Activated B cell treated with CpG ODN at 0.5 μM for 24 hours (primary cell): ENCODE measurements at regions of chr5 and their contacts with region 1.

Region 1: DNA sequence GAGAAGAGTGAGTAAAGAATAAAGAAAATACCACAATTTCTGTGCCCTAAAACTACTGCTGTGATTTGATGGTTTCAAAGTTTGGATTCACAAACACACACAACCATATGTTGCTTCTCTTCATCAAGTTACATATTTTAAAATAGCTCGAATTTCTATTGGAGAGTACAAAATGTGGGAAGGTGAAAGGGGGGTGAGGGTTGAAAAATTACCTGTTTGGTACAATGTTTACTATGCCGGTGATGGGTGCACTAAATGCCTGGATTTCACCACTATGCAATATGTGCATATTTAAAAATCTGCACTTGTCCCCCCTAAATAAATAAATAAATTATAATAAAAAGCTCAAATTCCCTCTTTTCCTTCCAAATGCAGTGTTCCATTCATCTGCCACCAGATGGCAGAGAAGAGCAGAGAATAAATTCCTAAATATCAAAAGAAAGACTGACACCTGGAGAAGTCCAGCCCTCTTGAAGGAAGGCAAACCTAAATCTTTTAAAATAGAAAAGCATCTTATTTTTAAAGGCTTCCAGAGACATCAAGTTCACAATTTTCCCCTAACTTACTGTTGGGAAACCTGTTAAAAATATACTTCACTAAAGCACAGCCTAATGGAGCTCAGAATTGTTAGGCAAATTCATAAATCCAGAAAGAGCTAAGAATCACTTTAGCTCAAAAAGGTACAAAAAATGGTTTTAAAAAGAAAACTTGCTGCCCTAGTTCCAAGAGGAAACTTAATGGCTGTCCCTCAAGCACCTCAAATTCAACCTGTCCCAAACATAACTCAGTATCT is 24.8 kb upstream of the HNRNPA0 start:
- DNase-seq: no peak
- ATAC-seq: no peak
- H3K4me3 Mint-ChIP-seq: no peak overlapping the region
- H3K27ac Mint-ChIP-seq: no peak overlapping the region
- H3K4me1 Mint-ChIP-seq: peaks cover 4% of the 10 kb centered on the region
- H3K27me3 Mint-ChIP-seq: no peaks in the 10 kb centered on the region
- CTCF ChIP-seq: no peak

Region 2: GRCh38 chr5:137822158-137822764 is 43.3 kb after region 1 on chr5:
- CTCF ChIA-PET with region 1: interaction called, 9 read pairs
- POLR2A ChIA-PET with region 1: no interaction called
- intact Hi-C with region 1: loop called (anchors 1 kb)
- DNase-seq: no peak
- ATAC-seq: no peak
- H3K4me3 Mint-ChIP-seq: no peak overlapping the region
- H3K27ac Mint-ChIP-seq: no peak overlapping the region
- H3K4me1 Mint-ChIP-seq: no peaks in the 10 kb centered on the region
- H3K27me3 Mint-ChIP-seq: no peaks in the 10 kb centered on the region
- CTCF ChIP-seq: no peak

Region 3: GRCh38 chr5:137933491-137933911 is 154.5 kb after region 1 on chr5:
- CTCF ChIA-PET with region 1: interaction called, 9 read pairs
- POLR2A ChIA-PET with region 1: interaction called, 7 read pairs
- intact Hi-C with region 1: loop called (anchors 5 kb)
- DNase-seq: no peak
- ATAC-seq: no peak
- H3K4me3 Mint-ChIP-seq: no peak overlapping the region
- H3K27ac Mint-ChIP-seq: peak overlapping the region; percentile 6
- H3K4me1 Mint-ChIP-seq: peaks cover 18% of the 10 kb centered on the region
- H3K27me3 Mint-ChIP-seq: no peaks in the 10 kb centered on the region
- CTCF ChIP-seq: no peak

Region 4: DNA sequence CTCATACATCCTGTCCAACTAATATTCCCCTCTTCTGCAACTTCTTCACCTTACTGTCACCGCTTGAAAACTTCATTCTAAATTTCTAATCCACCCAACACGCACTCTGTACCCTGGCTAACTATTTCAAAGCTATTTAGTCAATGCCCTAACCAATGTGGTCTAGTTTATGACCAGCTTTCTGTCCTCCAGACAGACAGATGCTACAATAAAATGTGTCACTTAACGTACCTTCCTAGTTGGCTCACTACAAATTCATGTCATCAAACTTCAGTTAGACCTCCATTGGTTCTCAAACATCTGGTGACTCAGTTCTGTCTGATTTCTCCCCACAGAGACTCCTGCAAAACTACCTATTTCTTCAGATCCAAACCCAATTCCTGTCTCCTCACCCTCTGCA is 196.2 kb after region 1 on chr5:
- CTCF ChIA-PET with region 1: no interaction called
- POLR2A ChIA-PET with region 1: no interaction called
- intact Hi-C with region 1: no loop called
- DNase-seq: no peak
- ATAC-seq: no peak
- H3K4me3 Mint-ChIP-seq: no peak overlapping the region
- H3K27ac Mint-ChIP-seq: no peak overlapping the region
- H3K4me1 Mint-ChIP-seq: no peaks in the 10 kb centered on the region
- H3K27me3 Mint-ChIP-seq: no peaks in the 10 kb centered on the region
- CTCF ChIP-seq: no peak

Region 5: DNA sequence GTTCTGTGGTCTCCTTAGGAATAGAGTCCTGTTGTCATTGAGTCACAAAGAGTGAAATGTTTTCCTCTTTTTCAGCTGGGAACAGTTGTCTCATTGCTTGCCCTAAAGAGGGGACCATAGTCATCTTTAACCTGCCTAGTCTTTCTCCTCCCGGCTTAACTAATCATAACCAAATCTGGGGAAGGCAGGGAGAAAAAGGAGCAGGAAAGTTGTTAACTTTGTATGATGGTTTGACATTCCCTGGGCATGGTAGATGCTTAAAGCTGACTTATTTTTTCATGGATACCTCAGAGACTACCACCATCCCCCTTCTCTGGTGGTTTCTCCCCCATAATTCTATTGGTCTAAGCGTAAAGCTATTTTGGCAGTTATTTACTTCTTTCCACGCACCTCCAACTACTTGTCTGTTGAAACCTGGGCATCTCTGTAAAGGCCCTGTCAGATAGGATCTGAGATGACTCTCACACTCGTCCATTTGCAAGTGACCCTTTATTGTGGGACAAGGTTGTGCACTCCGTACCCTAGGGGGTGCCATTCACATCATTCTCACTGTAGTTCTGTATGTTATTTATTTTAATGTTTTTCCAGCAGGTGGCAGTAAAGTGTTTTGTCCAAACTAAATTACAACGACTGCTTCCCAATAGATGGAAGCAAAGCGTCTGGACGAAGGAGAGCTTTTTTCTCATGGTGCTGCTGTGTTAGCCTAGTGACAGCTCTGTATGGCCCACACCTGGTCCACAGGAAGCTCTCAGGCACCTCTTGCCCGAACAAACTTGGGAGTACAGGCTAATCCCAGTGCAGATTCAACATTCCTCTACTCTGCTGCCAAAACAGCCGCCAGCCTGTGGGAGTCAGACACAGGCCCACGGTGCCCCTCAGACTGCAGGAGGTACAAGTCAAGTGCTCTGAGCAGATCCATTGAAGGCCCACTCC is 256.9 kb after region 1 on chr5:
- CTCF ChIA-PET with region 1: interaction called, 5 read pairs
- POLR2A ChIA-PET with region 1: no interaction called
- intact Hi-C with region 1: loop called (anchors 1 kb)
- DNase-seq: no peak
- ATAC-seq: peak; percentile 44
- H3K4me3 Mint-ChIP-seq: peak overlapping the region; percentile 48
- H3K27ac Mint-ChIP-seq: peak overlapping the region; percentile 21
- H3K4me1 Mint-ChIP-seq: peaks cover 34% of the 10 kb centered on the region
- H3K27me3 Mint-ChIP-seq: no peaks in the 10 kb centered on the region
- CTCF ChIP-seq: peak; percentile 72

Region 6: GRCh38 chr5:138077065-138077696 is 298.2 kb after region 1 on chr5:
- CTCF ChIA-PET with region 1: interaction called, 17 read pairs
- POLR2A ChIA-PET with region 1: no interaction called
- intact Hi-C with region 1: no loop called
- DNase-seq: no peak
- ATAC-seq: peak; percentile 54
- H3K4me3 Mint-ChIP-seq: no peak overlapping the region
- H3K27ac Mint-ChIP-seq: no peak overlapping the region
- H3K4me1 Mint-ChIP-seq: peaks cover 15% of the 10 kb centered on the region
- H3K27me3 Mint-ChIP-seq: no peaks in the 10 kb centered on the region
- CTCF ChIP-seq: peak; percentile 67